Right ventricle myocardium inferior (tissue), 1 donor: ENCODE measurements at regions of chr2 and their contacts with region 1.

Region 1: GRCh38 chr2:84495539-84496146 is 20.7 kb upstream of the DNAH6 start:
- DNase-seq: no peak
- ATAC-seq: peak; percentile 69

Region 2: GRCh38 chr2:84631047-84631446 is 135.4 kb after region 1 on chr2:
- intact Hi-C with region 1: loop called (anchors 5 kb)
- DNase-seq: no peak
- ATAC-seq: no peak

Region 3: DNA sequence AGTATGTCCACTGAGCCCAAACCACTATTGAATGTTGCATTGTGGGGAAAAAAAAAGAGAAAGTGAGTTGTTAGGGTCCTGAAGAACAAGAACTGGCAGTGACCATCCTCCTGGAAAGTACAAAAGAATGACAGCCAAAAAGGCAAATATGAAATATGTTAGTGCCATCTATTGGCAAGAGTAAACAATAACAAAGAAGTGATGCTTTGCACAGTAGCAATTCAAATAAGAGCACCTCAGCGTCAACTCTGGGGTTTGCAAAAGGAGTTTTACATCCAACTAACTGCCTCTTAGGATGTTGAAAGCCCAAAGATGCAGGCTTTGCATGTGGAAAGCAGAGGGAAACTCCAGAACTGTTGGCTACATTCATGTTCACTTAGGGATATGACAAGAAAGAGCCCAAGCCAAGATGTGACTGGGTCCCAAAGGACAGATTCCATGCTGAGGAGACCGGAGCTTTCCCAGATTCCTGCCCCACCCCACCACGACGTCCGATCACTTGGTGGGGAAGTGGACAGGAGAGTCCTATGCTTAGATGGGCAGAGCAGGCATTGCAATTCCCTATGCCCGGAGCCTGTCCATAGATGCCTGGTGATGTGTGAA is 369.6 kb after region 1 on chr2:
- intact Hi-C with region 1: loop called (anchors 5 kb)
- DNase-seq: no peak
- ATAC-seq: no peak

Region 4: GRCh38 chr2:84881581-84882414 is 386.2 kb after region 1 on chr2:
- intact Hi-C with region 1: loop called (anchors 1 kb)
- DNase-seq: peak; percentile 81
- ATAC-seq: peak; percentile 69